ENCODE measurements at regions of chr18 and their contacts with region 1.

Region 1: GRCh38 chr18:46657115-46657955 is at the start of gene LOXHD1:
- DNase-seq: no peak
- H3K4me3 ChIP-seq: no peak within 1 kb of the TSS
- H3K27ac ChIP-seq: no peak within 1 kb of the TSS
- H3K4me1 ChIP-seq: no peaks in the 10 kb centered on the region
- H3K27me3 ChIP-seq: peaks cover 0 to 12% of the 10 kb centered on the region in 2 donors
- CTCF ChIP-seq: no peak

Region 2: GRCh38 chr18:46148810-46149209 is 508.5 kb before region 1 on chr18:
- intact Hi-C with region 1: loop called (anchors 10 kb)
- DNase-seq: peak in 1 of 2 donors; percentile 38
- H3K4me3 ChIP-seq: no peak overlapping the region
- H3K27ac ChIP-seq: no peak overlapping the region
- H3K4me1 ChIP-seq: no peaks in the 10 kb centered on the region
- H3K27me3 ChIP-seq: no peaks in the 10 kb centered on the region
- CTCF ChIP-seq: peak; percentile 50 to 55

Region 3: GRCh38 chr18:46173393-46174341 is 483.7 kb before region 1 on chr18:
- intact Hi-C with region 1: loop called (anchors 5 kb)
- DNase-seq: peak; percentile 94 to 95
- H3K4me3 ChIP-seq: peak overlapping the region; percentile 95 to 100
- H3K27ac ChIP-seq: peak overlapping the region; percentile 90 to 92
- H3K4me1 ChIP-seq: peaks cover 0 to 38% (median 10%) of the 10 kb centered on the region in 4 donors
- H3K27me3 ChIP-seq: no peaks in the 10 kb centered on the region
- CTCF ChIP-seq: peak; percentile 64 to 68

Region 4: GRCh38 chr18:46281185-46282176 is 375.9 kb before region 1 on chr18:
- intact Hi-C with region 1: loop called (anchors 5 kb)
- DNase-seq: peak in 1 of 2 donors; percentile 36
- H3K4me3 ChIP-seq: no peak overlapping the region
- H3K27ac ChIP-seq: no peak overlapping the region
- H3K4me1 ChIP-seq: peaks cover 0 to 10% (median 0%) of the 10 kb centered on the region in 4 donors
- H3K27me3 ChIP-seq: no peaks in the 10 kb centered on the region
- CTCF ChIP-seq: peak; percentile 68 to 85

Region 5: GRCh38 chr18:46596119-46596518 is 61.2 kb before region 1 on chr18:
- intact Hi-C with region 1: no loop called
- DNase-seq: no peak
- H3K4me3 ChIP-seq: no peak overlapping the region
- H3K27ac ChIP-seq: no peak overlapping the region
- H3K4me1 ChIP-seq: no peaks in the 10 kb centered on the region
- H3K27me3 ChIP-seq: no peaks in the 10 kb centered on the region
- CTCF ChIP-seq: no peak

Measured in tibial artery (tissue), 4 donors.